ENCODE measurements at regions of chr6 and their contacts with region 1.

Region 1: GRCh38 chr6:135183532-135184440 is 2.7 kb downstream of the MYB start:
- DNase-seq: peak; percentile 67 to 72
- H3K4me3 ChIP-seq: peak overlapping the region; percentile 57
- H3K4me3 Mint-ChIP-seq: peak overlapping the region; percentile 88
- H3K27ac Mint-ChIP-seq: no peak overlapping the region
- H3K4me1 ChIP-seq: peaks cover 9% of the 10 kb centered on the region
- H3K4me1 Mint-ChIP-seq: peaks cover 12% of the 10 kb centered on the region
- H3K27me3 ChIP-seq: no peaks in the 10 kb centered on the region
- H3K27me3 Mint-ChIP-seq: peaks cover 8% of the 10 kb centered on the region
- CTCF ChIP-seq: peak; percentile 57 to 69

Region 2: DNA sequence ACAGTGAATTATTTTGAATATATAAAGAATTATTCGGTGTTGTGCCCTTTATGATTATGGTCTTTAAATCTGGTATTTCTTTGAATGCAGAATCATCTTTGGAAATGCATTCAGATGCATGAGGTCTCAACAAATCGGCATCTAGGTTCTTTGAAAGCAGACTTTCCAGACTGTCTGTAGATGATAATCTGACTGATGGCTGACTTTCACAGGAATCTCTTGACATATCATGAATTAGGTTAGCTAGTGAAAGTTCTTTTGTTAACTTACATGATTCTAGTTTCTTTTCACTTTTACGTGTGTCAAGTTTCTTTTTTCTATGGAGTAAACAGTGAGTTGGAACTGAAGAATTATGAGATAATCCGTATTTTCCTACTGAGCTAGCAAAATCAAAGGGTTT is 146.2 kb before region 1 on chr6:
- CTCF ChIA-PET with region 1: no interaction called
- POLR2A ChIA-PET with region 1: no interaction called
- intact Hi-C with region 1: no loop called
- DNase-seq: no peak
- H3K4me3 ChIP-seq: no peak overlapping the region
- H3K4me3 Mint-ChIP-seq: no peak overlapping the region
- H3K27ac Mint-ChIP-seq: no peak overlapping the region
- H3K4me1 ChIP-seq: no peaks in the 10 kb centered on the region
- H3K4me1 Mint-ChIP-seq: no peaks in the 10 kb centered on the region
- H3K27me3 ChIP-seq: no peaks in the 10 kb centered on the region
- H3K27me3 Mint-ChIP-seq: no peaks in the 10 kb centered on the region
- CTCF ChIP-seq: no peak

Region 3: GRCh38 chr6:135054569-135055498 is 129.0 kb before region 1 on chr6 and contains the start of gene HBS1L:
- CTCF ChIA-PET with region 1: no interaction called
- POLR2A ChIA-PET with region 1: interaction called, 10 read pairs
- intact Hi-C with region 1: loop called (anchors 10 kb)
- DNase-seq: peak; percentile 97
- H3K4me3 ChIP-seq: peak within 1 kb of the TSS; percentile 82
- H3K4me3 Mint-ChIP-seq: peak within 1 kb of the TSS; percentile 90
- H3K27ac Mint-ChIP-seq: peak within 1 kb of the TSS; percentile 94
- H3K4me1 ChIP-seq: no peaks in the 10 kb centered on the region
- H3K4me1 Mint-ChIP-seq: peaks cover 20% of the 10 kb centered on the region
- H3K27me3 ChIP-seq: no peaks in the 10 kb centered on the region
- H3K27me3 Mint-ChIP-seq: no peaks in the 10 kb centered on the region
- CTCF ChIP-seq: no peak
- total RNA-seq, gene HBS1L: 79.2 and 81.2 TPM in 2 replicates

Region 4: DNA sequence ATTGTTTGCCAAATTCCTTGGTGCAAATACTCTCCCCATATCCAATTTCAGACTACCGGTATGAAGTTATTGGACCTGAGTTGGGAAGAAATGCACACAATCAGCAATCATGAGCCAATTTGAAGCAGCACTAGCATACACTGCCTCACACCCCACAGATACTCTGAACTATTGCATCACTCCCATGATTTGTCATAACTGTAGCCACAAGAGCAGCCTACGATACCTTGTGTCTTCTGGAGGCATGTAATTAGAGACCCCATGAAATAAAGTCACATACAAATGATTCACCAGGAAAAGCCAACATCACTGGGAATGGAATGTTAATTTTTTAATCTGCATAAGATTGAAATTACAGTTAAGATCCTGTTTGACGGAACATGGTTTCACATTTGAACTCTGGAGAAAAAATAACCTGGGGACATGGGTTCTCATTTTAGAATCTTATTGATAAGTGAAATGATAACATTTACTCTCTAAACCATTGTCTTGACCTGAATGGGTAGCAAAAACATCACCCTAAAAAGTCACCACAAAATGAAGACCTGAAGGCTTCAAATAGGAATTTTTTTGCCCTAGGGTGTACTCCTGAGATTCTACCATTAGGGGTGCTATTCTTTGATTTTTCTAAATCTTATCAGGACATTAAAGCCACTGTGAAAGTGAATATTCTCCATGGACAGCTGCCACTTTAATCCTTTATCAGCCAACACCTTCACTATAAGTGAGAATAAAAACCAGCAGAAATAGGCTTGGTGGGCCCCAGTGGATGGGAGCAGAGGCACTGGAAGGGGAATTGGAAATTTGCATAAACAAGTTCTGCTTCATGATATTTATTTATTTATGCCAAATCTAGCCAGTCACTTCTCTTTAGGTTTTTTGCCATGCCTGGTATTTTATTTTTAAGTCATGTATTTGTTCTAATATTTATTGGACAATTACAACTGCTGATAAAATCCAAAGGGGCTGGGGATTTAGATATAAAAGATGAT is 94.7 kb before region 1 on chr6:
- CTCF ChIA-PET with region 1: interaction called, 3 read pairs
- POLR2A ChIA-PET with region 1: no interaction called
- intact Hi-C with region 1: loop called (anchors 5 kb)
- DNase-seq: no peak
- H3K4me3 ChIP-seq: no peak overlapping the region
- H3K4me3 Mint-ChIP-seq: no peak overlapping the region
- H3K27ac Mint-ChIP-seq: no peak overlapping the region
- H3K4me1 ChIP-seq: no peaks in the 10 kb centered on the region
- H3K4me1 Mint-ChIP-seq: no peaks in the 10 kb centered on the region
- H3K27me3 ChIP-seq: no peaks in the 10 kb centered on the region
- H3K27me3 Mint-ChIP-seq: peaks cover 4% of the 10 kb centered on the region
- CTCF ChIP-seq: peak; percentile 21 to 24

Region 5: GRCh38 chr6:135145063-135145800 is 38.6 kb before region 1 on chr6:
- CTCF ChIA-PET with region 1: interaction called, 3 read pairs
- POLR2A ChIA-PET with region 1: no interaction called
- intact Hi-C with region 1: loop called (anchors 1 kb)
- DNase-seq: peak in 1 of 2 experiments; percentile 30
- H3K4me3 ChIP-seq: no peak overlapping the region
- H3K4me3 Mint-ChIP-seq: no peak overlapping the region
- H3K27ac Mint-ChIP-seq: no peak overlapping the region
- H3K4me1 ChIP-seq: no peaks in the 10 kb centered on the region
- H3K4me1 Mint-ChIP-seq: no peaks in the 10 kb centered on the region
- H3K27me3 ChIP-seq: no peaks in the 10 kb centered on the region
- H3K27me3 Mint-ChIP-seq: no peaks in the 10 kb centered on the region
- CTCF ChIP-seq: peak; percentile 48 to 57

Region 6: DNA sequence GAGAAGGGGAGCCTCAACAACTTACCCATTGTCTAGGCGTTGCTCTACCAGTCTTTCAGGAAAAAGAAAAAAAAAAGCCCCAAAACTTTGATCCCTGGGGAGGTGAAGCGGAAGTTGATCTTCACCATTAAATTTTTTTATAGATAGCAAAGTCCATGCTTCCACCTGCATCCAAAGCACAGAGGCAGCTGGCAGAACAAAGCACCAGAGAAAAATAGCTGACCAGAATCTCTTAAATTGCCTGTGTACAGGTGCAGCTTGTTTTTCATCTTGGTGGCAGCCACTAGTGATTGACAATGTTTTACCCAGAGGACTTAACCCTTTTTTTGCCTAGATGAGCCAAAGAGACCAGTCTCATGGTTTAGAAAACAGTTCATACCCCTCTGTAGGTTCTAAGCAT is 83.3 kb after region 1 on chr6:
- CTCF ChIA-PET with region 1: interaction called, 4 read pairs
- POLR2A ChIA-PET with region 1: no interaction called
- intact Hi-C with region 1: loop called (anchors 5 kb)
- DNase-seq: peak; percentile 65 to 69
- H3K4me3 ChIP-seq: no peak overlapping the region
- H3K4me3 Mint-ChIP-seq: no peak overlapping the region
- H3K27ac Mint-ChIP-seq: peak overlapping the region; percentile 22
- H3K4me1 ChIP-seq: peaks cover 34% of the 10 kb centered on the region
- H3K4me1 Mint-ChIP-seq: peaks cover 26% of the 10 kb centered on the region
- H3K27me3 ChIP-seq: no peaks in the 10 kb centered on the region
- H3K27me3 Mint-ChIP-seq: no peaks in the 10 kb centered on the region
- CTCF ChIP-seq: no peak

Region 7: GRCh38 chr6:135423649-135424128 is 239.9 kb after region 1 on chr6:
- CTCF ChIA-PET with region 1: no interaction called
- POLR2A ChIA-PET with region 1: no interaction called
- intact Hi-C with region 1: loop called (anchors 2 kb)
- DNase-seq: peak in 1 of 2 experiments; percentile 37
- H3K4me3 ChIP-seq: no peak overlapping the region
- H3K4me3 Mint-ChIP-seq: no peak overlapping the region
- H3K27ac Mint-ChIP-seq: no peak overlapping the region
- H3K4me1 ChIP-seq: 0 out of 2 replicates have a peak, but pooled peaks cover 9% of the 10 kb centered on the region
- H3K4me1 Mint-ChIP-seq: peaks cover 8% of the 10 kb centered on the region
- H3K27me3 ChIP-seq: no peaks in the 10 kb centered on the region
- H3K27me3 Mint-ChIP-seq: no peaks in the 10 kb centered on the region
- CTCF ChIP-seq: peak; percentile 58 to 60